ENCODE measurements at regions of chr13 and their contacts with region 1.

Region 1: GRCh38 chr13:76016799-76017400 is 380.8 kb downstream of the LMO7 start:
- DNase-seq: peak; percentile 35
- ATAC-seq: peak; percentile 67
- H3K4me3 ChIP-seq: no peak overlapping the region
- H3K27ac ChIP-seq: no peak overlapping the region
- H3K4me1 ChIP-seq: peaks cover 0 to 17% of the 10 kb centered on the region in 2 experiments
- H3K27me3 ChIP-seq: no peaks in the 10 kb centered on the region
- CTCF ChIP-seq: peak; percentile 29 to 67 (median 61); a peak in 5 of 6 replicates
- POLR2A ChIP-seq: no peak
- RAD21 ChIP-seq: peak; percentile 53

Region 2: GRCh38 chr13:75687150-75687763 is 329.6 kb before region 1 on chr13:
- CTCF ChIA-PET with region 1: interaction called, 3 read pairs
- POLR2A ChIA-PET with region 1: no interaction called
- RAD21 ChIA-PET with region 1: no interaction called
- intact Hi-C with region 1: loop called (anchors 2 kb)
- DNase-seq: peak; percentile 24
- ATAC-seq: peak; percentile 83
- H3K4me3 ChIP-seq: no peak overlapping the region
- H3K27ac ChIP-seq: no peak overlapping the region
- H3K4me1 ChIP-seq: peaks cover 8 to 11% of the 10 kb centered on the region in 2 experiments
- H3K27me3 ChIP-seq: no peaks in the 10 kb centered on the region
- CTCF ChIP-seq: peak; percentile 29 to 70 (median 58); a peak in 5 of 6 replicates
- POLR2A ChIP-seq: no peak
- RAD21 ChIP-seq: peak; percentile 60

Region 3: DNA sequence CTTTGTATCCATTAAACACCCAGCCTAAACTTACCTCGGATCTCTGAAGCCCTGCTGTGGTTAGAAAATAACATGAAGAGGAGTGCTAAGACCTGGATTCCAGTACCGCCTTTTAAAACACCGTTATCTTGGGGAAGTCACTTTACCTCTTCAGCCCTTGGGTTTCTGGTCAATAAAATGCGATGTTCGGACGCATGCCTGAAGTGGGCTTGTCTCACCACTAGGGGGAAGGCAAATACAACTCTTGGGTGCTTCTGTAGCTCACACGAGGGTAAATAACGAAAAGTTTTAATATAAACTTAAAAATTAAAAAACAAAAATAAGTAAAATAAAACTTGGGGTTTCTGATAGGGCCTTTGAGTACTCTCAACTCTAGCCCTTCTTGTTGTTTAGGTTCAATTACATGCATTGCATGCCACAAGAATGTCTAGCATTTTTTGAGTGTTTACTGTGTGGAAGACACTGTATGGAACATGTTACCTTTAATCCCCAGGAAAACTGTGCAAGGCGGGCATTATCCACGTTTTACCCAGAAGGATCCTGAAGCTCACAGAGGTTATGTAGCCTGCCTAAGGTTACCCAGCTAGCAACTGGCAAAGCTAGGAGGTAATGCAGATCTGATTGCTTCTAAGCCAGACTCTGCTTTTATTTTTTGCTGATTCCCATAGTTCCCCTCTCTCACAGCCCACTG is 140.4 kb before region 1 on chr13:
- CTCF ChIA-PET with region 1: interaction called, 3 read pairs
- POLR2A ChIA-PET with region 1: no interaction called
- RAD21 ChIA-PET with region 1: no interaction called
- intact Hi-C with region 1: loop called (anchors 2 kb)
- DNase-seq: peak; percentile 60
- ATAC-seq: peak; percentile 98
- H3K4me3 ChIP-seq: no peak overlapping the region
- H3K27ac ChIP-seq: no peak overlapping the region
- H3K4me1 ChIP-seq: peaks cover 0 to 4% of the 10 kb centered on the region in 2 experiments; a peak in 1 of 4 replicates
- H3K27me3 ChIP-seq: no peaks in the 10 kb centered on the region
- CTCF ChIP-seq: peak; percentile 81 to 86 (median 85)
- POLR2A ChIP-seq: no peak
- RAD21 ChIP-seq: peak; percentile 90

Region 4: GRCh38 chr13:75986818-75987217 is 30.1 kb before region 1 on chr13:
- CTCF ChIA-PET with region 1: no interaction called
- POLR2A ChIA-PET with region 1: no interaction called
- RAD21 ChIA-PET with region 1: no interaction called
- intact Hi-C with region 1: no loop called
- DNase-seq: no peak
- ATAC-seq: no peak
- H3K4me3 ChIP-seq: no peak overlapping the region
- H3K27ac ChIP-seq: no peak overlapping the region
- H3K4me1 ChIP-seq: no peaks in the 10 kb centered on the region
- H3K27me3 ChIP-seq: no peaks in the 10 kb centered on the region
- CTCF ChIP-seq: no peak
- POLR2A ChIP-seq: no peak
- RAD21 ChIP-seq: no peak

Region 5: DNA sequence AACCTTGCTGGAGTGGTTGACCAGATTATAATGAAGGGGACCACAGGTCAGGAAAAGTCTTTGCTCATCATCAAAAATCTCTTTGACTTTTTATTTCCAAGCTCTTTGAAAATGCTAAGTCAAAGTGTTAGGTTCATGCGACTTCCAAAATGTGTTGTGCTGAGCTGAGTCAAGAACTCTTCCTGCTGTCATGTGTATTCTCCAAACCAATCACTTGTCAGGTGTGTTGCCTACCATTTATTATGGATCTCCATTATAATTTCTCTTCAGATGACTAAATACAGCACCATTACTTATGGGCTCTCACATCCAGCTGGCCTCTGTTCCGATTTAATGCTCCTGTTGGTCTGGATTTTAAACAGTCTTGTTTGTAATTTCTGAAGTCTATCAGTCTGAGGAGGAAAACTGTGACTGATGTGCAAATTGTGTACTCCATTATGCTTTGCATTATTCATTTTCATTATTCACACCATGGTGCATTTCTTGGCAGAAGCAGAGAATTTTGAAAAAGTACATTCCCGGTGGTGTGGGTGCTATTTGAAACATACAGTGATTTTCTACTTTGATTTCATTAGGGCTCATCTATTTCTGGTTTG is 181.8 kb after region 1 on chr13:
- CTCF ChIA-PET with region 1: no interaction called
- POLR2A ChIA-PET with region 1: no interaction called
- RAD21 ChIA-PET with region 1: no interaction called
- intact Hi-C with region 1: no loop called
- DNase-seq: no peak
- ATAC-seq: no peak
- H3K4me3 ChIP-seq: no peak overlapping the region
- H3K27ac ChIP-seq: no peak overlapping the region
- H3K4me1 ChIP-seq: no peaks in the 10 kb centered on the region
- H3K27me3 ChIP-seq: no peaks in the 10 kb centered on the region
- CTCF ChIP-seq: no peak
- POLR2A ChIP-seq: no peak
- RAD21 ChIP-seq: no peak

Region 6: DNA sequence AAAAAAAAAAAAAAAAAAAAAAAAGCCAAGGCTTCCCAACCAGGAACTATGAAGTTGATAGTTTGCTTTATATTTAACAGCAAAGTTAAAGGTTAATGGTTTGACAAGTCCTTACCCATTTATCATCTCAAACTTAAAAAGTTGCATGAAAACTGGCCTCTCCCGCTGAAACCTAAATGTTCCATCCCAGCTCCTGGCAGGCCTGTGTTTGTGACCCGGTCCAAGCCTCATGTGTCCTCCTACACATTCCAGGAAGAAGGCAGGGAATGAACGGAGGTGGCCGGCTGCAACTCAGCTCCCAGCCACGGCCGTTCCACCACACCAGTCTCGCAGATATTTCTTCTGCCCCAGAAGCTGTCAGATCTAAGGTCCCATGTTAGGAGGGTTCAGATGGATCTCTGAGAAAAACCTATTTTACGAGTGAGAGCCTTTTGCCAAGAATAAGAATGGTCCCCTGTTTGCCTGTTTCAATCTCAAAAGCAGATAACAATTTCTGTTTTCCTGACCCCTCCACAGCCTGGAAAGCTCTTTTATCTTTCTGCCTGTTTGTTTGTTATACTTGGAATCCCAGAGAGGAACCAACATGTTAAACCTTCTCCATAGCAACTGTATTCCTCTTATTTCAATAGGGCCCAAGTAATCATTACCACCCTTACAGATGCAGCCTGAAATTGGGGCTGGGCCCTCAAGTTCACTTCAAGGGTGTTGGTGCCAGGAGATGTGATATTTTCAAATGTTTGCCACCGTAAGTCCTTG is 812.9 kb after region 1 on chr13:
- CTCF ChIA-PET with region 1: no interaction called
- POLR2A ChIA-PET with region 1: no interaction called
- RAD21 ChIA-PET with region 1: no interaction called
- intact Hi-C with region 1: no loop called
- DNase-seq: no peak
- ATAC-seq: no peak
- H3K4me3 ChIP-seq: no peak overlapping the region
- H3K27ac ChIP-seq: no peak overlapping the region
- H3K4me1 ChIP-seq: no peaks in the 10 kb centered on the region
- H3K27me3 ChIP-seq: no peaks in the 10 kb centered on the region; the same call in 1 of the 2 replicates
- CTCF ChIP-seq: no peak
- POLR2A ChIP-seq: no peak
- RAD21 ChIP-seq: no peak

Measured in HCT116 (cell line).